Activated T-helper 1 cell treated with anti-CD3 and anti-CD28 coated beads, Interleukin-12 subunit alpha, Interleukin-12 subunit beta, Interleukin-2, Interleukin-4 antibody, amounts not matched to agents 30 ng/mL and 10 ng/mL and 1 ng/mL, durations not matched to agents 14 hours and 24 hours and 36 hours (primary cell): ENCODE measurements at regions of chr2 and their contacts with region 1.

Region 1: GRCh38 chr2:199979832-199980628 is 24.6 kb downstream of the MAIP1 start:
- DNase-seq: peak; percentile 62
- H3K4me3 Mint-ChIP-seq: no peak overlapping the region
- H3K27ac Mint-ChIP-seq: no peak overlapping the region
- H3K4me1 Mint-ChIP-seq: peaks cover 28% of the 10 kb centered on the region
- H3K27me3 Mint-ChIP-seq: no peaks in the 10 kb centered on the region

Region 2: DNA sequence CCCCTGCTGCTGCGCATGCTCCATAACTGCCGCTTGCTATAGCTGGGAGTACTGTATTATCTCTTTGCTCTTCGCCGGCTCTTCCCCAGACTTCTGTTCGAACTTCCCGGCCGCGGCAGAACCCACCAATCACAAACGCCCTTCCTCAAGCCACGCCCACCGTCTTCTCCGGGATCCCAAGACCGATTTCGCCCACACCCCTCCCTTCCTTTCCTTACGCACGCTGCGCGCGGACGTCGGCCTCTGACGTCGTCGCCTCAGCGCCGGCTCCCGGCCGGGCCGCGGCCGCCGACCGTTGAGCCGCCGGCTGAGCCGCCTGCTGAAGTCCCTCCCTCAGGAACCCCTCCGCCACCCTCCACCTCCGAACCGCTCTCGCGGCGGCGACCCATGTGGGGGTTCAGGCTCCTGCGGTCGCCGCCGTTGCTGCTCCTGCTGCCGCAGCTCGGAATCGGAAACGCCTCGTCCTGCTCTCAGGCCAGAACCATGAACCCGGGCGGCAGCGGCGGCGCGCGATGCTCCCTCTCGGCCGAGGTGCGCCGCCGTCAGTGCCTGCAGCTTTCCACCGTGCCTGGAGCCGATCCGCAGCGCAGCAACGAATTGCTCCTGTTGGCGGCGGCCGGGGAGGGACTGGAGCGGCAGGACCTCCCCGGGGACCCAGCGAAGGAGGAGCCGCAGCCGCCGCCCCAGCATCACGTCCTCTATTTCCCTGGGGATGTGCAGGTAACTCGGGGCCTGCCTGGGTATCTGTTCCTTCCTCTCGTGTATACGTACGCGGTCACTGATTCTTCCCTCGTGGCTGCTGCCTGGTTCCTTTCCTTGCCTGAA is 68.8 kb before region 1 on chr2 and contains the start of gene C2orf69:
- intact Hi-C with region 1: no loop called
- DNase-seq: peak; percentile 86
- H3K4me3 Mint-ChIP-seq: peak within 1 kb of the TSS; percentile 100
- H3K27ac Mint-ChIP-seq: peak within 1 kb of the TSS; percentile 99
- H3K4me1 Mint-ChIP-seq: peaks cover 39% of the 10 kb centered on the region
- H3K27me3 Mint-ChIP-seq: peaks cover 3% of the 10 kb centered on the region
- total RNA-seq, gene C2orf69: 16.6 and 18.0 TPM in 2 replicates

Region 3: DNA sequence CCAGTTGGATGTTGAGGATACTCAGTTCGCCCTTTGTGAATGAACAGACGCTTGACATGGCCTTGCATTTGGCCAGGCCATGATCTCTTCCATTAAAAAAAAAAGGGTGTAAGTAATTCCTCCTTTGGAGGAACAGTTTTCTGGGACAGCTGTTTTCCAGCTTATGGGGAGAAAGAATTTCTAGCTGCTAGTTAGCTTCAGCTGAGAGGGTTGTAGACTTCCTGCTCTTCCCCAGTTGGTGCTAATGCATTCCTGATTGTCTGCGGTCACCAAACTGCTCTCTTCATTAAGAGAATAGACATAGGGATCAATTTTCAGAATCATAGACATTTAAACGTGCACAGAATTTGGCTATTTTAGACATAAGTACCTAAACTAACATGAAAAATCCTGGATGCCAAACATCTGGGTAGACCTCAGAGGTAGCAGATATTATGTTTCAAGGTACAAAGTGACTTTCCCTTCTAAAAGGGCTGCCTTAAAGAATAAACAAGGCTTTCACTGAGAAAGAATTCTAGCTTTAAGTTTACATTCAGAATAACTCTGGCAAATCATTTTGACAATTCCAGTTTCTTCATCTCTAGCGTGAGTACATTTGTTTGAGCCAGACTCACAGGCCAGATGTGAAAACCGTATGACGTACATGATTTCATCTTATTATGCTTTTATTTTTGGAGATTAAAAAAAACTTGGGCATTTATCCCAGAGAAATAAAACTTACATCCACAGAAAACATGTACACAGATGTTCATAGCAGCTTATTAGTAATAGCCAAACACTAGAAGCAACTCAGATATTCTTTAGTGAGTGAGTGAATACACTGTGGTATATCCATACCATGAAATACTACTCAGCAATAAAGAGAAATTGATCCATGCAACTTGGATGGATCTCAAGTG is 46.6 kb after region 1 on chr2:
- intact Hi-C with region 1: no loop called
- DNase-seq: no peak
- H3K4me3 Mint-ChIP-seq: no peak overlapping the region
- H3K27ac Mint-ChIP-seq: no peak overlapping the region
- H3K4me1 Mint-ChIP-seq: no peaks in the 10 kb centered on the region
- H3K27me3 Mint-ChIP-seq: no peaks in the 10 kb centered on the region

Region 4: GRCh38 chr2:200306196-200306930 is 326.3 kb after region 1 on chr2 and contains the start of gene SPATS2L:
- intact Hi-C with region 1: loop called (anchors 5 kb)
- DNase-seq: peak; percentile 44
- H3K4me3 Mint-ChIP-seq: peak within 1 kb of the TSS; percentile 90
- H3K27ac Mint-ChIP-seq: peak within 1 kb of the TSS; percentile 85
- H3K4me1 Mint-ChIP-seq: peaks cover 35% of the 10 kb centered on the region
- H3K27me3 Mint-ChIP-seq: peaks cover 10% of the 10 kb centered on the region
- total RNA-seq, gene SPATS2L: 35.1 and 38.0 TPM in 2 replicates

Region 5: GRCh38 chr2:200471324-200471848 is 491.4 kb after region 1 on chr2:
- intact Hi-C with region 1: loop called (anchors 2 kb)
- DNase-seq: no peak
- H3K4me3 Mint-ChIP-seq: no peak overlapping the region
- H3K27ac Mint-ChIP-seq: peak overlapping the region; percentile 47
- H3K4me1 Mint-ChIP-seq: peaks cover 36% of the 10 kb centered on the region
- H3K27me3 Mint-ChIP-seq: no peaks in the 10 kb centered on the region

Region 6: GRCh38 chr2:200509612-200510433 is 529.8 kb after region 1 on chr2 and contains the start of gene KCTD18:
- intact Hi-C with region 1: loop called (anchors 1 kb)
- DNase-seq: peak; percentile 90
- H3K4me3 Mint-ChIP-seq: peak within 1 kb of the TSS; percentile 96
- H3K27ac Mint-ChIP-seq: peak within 1 kb of the TSS; percentile 90
- H3K4me1 Mint-ChIP-seq: peaks cover 21% of the 10 kb centered on the region
- H3K27me3 Mint-ChIP-seq: no peaks in the 10 kb centered on the region
- total RNA-seq, gene KCTD18: 14.5 and 15.8 TPM in 2 replicates

Region 7: DNA sequence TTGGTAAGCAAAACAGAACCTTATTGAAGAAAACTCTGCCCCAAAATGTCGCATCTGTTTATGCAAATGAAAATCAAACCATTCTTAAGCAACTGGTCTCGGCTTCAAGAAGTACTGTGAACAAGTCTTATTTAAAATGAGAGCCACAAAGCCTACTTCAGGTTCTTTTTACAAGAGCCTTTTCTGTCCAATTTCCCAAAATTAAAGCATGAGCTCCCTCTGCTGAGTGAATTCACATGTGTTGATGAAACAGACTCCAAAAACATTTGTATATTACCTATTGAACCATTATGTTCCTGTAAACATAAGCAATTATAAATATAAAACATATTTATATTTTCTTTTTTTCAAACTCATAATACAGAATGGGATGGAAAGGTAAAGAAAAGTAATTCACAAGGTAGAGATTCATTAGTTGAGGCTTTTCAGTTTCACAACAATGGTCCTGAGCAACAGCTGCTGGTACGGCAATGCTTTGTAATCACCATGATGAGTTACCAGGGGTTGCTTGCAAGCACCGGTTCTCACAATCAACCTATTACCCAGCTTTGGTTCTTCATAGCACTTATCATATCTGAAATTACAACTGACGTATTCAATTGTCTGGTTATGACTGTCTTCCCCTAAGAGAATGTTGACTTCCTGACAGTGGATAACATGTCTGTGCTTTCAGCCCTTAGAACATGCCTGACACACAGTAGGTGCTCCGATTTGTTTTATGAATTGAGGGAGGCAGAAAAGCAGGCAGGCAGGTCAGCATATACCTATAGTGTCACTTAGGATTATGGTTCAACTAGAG is 723.3 kb after region 1 on chr2:
- intact Hi-C with region 1: loop called (anchors 1 kb)
- DNase-seq: peak; percentile 4
- H3K4me3 Mint-ChIP-seq: peak overlapping the region; percentile 35
- H3K27ac Mint-ChIP-seq: peak overlapping the region; percentile 82
- H3K4me1 Mint-ChIP-seq: peaks cover 48% of the 10 kb centered on the region
- H3K27me3 Mint-ChIP-seq: no peaks in the 10 kb centered on the region